Left ventricle myocardium inferior (tissue), 1 donor: ENCODE measurements at regions of chr13 and their contacts with region 1.

Region 1: DNA sequence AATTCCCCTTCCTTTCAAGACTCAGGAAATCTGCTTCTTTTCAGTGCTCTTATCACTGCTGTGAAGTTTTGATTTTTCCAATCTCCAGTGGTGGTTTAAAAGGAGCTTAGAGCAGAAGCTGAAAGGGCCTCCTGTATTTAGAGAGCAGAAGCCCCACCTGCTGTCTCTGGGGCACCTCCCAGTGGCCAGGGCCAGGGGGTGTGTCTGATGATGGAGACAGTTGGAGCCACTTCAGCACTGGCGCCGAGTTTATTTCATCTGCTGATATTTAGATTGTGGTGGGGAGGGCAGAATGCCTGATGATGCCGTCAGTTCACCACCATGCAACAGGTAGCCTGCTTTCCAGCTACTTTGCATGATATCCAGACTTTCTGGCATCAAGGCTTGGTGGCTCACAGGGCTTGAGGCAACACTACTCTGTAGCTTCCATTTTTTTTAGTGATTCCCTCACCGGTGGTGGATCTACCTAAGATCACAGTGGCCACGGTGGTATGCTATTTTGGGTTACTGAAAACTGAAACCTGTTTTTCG is 371.9 kb downstream of the KCNRG start:
- DNase-seq: peak; percentile 64
- H3K4me3 ChIP-seq: peak overlapping the region; percentile 53
- H3K27ac ChIP-seq: peak overlapping the region; percentile 83
- H3K4me1 ChIP-seq: peaks cover 19% of the 10 kb centered on the region
- H3K27me3 ChIP-seq: no peaks in the 10 kb centered on the region
- CTCF ChIP-seq: peak; percentile 50

Region 2: GRCh38 chr13:50198508-50198907 is 188.6 kb before region 1 on chr13:
- intact Hi-C with region 1: no loop called
- DNase-seq: no peak
- H3K4me3 ChIP-seq: no peak overlapping the region
- H3K27ac ChIP-seq: no peak overlapping the region
- H3K4me1 ChIP-seq: peaks cover 12% of the 10 kb centered on the region
- H3K27me3 ChIP-seq: no peaks in the 10 kb centered on the region
- CTCF ChIP-seq: no peak

Region 3: GRCh38 chr13:50512474-50513299 is 125.6 kb after region 1 on chr13:
- intact Hi-C with region 1: loop called (anchors 10 kb)
- DNase-seq: peak; percentile 66
- H3K4me3 ChIP-seq: peak overlapping the region; percentile 54
- H3K27ac ChIP-seq: peak overlapping the region; percentile 87
- H3K4me1 ChIP-seq: peaks cover 33% of the 10 kb centered on the region
- H3K27me3 ChIP-seq: no peaks in the 10 kb centered on the region
- CTCF ChIP-seq: peak; percentile 43